HepG2 (cell line): ENCODE measurements at regions of chr3 and their contacts with region 1.

Region 1: GRCh38 chr3:159804726-159805410 is 183.8 kb upstream of the IL12A start:
- DNase-seq: peak; percentile 73
- ATAC-seq: peak; percentile 99
- H3K4me3 ChIP-seq: no peak overlapping the region
- H3K27ac ChIP-seq: no peak overlapping the region
- H3K4me1 ChIP-seq: peaks cover 7% of the 10 kb centered on the region; the same call in 1 of the 2 replicates
- H3K27me3 ChIP-seq: no peaks in the 10 kb centered on the region
- CTCF ChIP-seq: peak; percentile 94
- EP300 ChIP-seq: no peak
- POLR2A ChIP-seq: no peak
- RAD21 ChIP-seq: peak; percentile 91

Region 2: DNA sequence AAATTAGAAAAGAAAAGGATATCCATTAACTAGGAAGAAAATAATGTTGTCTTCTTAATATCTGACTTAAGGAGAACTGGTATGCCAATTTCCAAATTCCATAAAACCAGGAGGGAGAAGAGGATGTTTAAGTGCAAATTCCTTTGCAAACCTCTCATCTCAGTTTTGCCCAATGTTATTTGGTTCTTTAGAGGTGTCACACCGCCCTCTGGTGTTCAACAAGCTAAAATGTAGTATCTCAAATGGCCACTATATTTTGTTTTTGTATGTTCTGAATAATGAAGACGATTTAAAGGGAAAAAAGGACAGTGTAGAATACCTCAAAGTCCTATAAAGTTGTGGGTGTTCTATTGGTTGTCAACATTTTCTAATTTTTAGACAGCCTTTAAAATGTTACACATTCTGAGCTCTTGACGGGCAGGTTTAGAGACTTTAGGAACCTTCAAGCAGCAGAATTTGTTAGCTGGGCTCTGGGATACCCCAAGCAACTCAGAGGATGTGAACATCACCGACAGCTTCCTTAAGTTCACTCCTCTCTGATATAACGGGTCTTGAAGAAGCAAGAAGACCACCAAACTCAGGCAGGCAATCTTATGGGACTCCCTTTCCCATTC is 544.7 kb before region 1 on chr3:
- CTCF ChIA-PET with region 1: interaction called, 19 read pairs
- POLR2A ChIA-PET with region 1: no interaction called
- in situ Hi-C with region 1: loop called (anchors 5 kb)
- intact Hi-C with region 1: loop called (anchors 1 kb)
- DNase-seq: peak; percentile 56
- ATAC-seq: peak; percentile 68
- H3K4me3 ChIP-seq: no peak overlapping the region
- H3K27ac ChIP-seq: no peak overlapping the region
- H3K4me1 ChIP-seq: no peaks in the 10 kb centered on the region
- H3K27me3 ChIP-seq: no peaks in the 10 kb centered on the region
- CTCF ChIP-seq: peak; percentile 74
- EP300 ChIP-seq: no peak
- POLR2A ChIP-seq: no peak
- RAD21 ChIP-seq: peak; percentile 57

Region 3: DNA sequence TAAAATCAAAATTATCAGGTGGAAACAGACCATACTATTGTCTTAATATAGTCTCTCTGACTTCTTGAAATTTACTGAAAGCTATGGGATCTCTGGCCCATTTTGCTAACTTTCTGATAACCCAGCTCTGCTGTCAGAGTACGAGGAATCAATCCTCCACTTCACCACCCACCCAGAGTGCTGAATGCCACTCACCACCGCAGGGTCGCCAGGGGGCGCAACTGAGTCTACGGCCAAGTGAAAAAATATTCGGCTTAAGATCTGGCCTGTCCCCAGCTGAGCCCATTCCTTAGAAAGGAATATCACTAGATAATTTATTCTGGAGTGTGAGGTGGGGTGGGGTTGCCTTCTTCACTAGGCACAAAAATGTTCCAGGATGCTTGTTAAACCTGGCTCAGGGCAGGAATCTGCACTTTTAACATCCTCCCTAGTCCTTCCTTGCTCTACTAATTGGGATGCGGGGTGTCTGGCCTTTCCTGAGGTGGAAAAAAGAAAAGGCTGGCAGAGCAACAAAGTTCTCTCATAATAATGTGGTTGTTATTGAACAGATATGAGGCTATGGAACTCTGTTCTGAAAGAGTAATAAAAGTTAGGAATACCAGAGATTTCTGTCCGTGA is 482.4 kb before region 1 on chr3:
- CTCF ChIA-PET with region 1: no interaction called
- POLR2A ChIA-PET with region 1: no interaction called
- in situ Hi-C with region 1: no loop called
- intact Hi-C with region 1: loop called (anchors 1 kb)
- DNase-seq: peak; percentile 7
- ATAC-seq: peak; percentile 70
- H3K4me3 ChIP-seq: no peak overlapping the region
- H3K27ac ChIP-seq: no peak overlapping the region
- H3K4me1 ChIP-seq: no peaks in the 10 kb centered on the region
- H3K27me3 ChIP-seq: no peaks in the 10 kb centered on the region
- CTCF ChIP-seq: peak; percentile 57
- EP300 ChIP-seq: no peak
- POLR2A ChIP-seq: no peak
- RAD21 ChIP-seq: no peak

Region 4: DNA sequence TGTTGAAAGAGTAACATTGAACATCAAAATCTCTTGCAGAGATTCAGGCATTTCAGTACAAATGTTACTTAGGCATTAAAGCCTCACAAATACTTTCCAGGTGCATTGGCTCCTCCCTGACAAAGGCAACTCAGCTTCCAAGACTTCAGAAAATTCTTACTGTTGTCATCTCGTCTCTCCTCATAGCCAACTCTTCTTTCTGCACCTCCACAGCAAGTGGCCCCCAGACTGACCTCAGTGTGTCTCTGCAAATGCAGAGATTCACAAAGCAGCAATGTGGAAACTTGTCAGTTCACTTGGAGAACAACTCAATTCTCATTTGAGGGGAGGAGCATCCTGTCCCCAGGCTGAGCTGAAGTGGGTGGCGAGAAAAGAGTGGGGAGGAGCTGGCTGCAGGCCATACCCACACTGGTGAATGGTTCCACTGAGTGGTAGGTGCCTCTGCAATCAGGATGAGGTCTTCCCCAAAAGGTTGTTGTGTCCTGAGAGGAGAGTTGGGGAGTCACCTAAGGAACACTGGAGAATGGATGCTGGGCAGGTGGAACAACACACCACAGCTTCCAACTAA is 64.9 kb before region 1 on chr3:
- CTCF ChIA-PET with region 1: no interaction called
- POLR2A ChIA-PET with region 1: no interaction called
- in situ Hi-C with region 1: no loop called
- intact Hi-C with region 1: loop called (anchors 10 kb)
- DNase-seq: no peak
- ATAC-seq: no peak
- H3K4me3 ChIP-seq: no peak overlapping the region
- H3K27ac ChIP-seq: no peak overlapping the region
- H3K4me1 ChIP-seq: peaks cover 8% of the 10 kb centered on the region; the same call in 1 of the 2 replicates
- H3K27me3 ChIP-seq: no peaks in the 10 kb centered on the region; a peak in 1 of 5 replicates
- CTCF ChIP-seq: no peak
- EP300 ChIP-seq: no peak
- POLR2A ChIP-seq: no peak
- RAD21 ChIP-seq: no peak

Region 5: DNA sequence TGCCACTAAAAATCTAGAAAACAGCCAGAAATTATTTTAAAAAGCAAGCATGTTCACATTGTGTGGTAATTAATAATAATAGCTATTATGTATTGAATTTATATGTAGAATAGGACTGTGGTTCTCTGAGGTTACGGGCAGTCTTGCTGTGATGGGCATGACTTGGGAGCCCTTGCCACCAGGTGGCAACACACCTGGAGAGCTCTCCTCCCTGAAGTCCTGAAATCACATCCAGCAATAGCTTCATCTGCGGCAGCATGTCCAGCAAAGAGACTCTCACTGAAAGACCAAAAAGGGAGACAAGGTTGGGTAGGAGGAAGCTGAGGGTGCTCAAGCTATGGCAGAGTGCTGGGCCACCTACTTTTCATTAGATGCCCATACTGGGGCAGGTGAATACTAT is 23.0 kb before region 1 on chr3:
- CTCF ChIA-PET with region 1: interaction called, 33 read pairs
- POLR2A ChIA-PET with region 1: no interaction called
- in situ Hi-C with region 1: no loop called
- intact Hi-C with region 1: loop called (anchors 1 kb)
- DNase-seq: no peak
- ATAC-seq: peak; percentile 51; the same call in 2 of the 3 replicates
- H3K4me3 ChIP-seq: no peak overlapping the region
- H3K27ac ChIP-seq: no peak overlapping the region
- H3K4me1 ChIP-seq: peaks cover 48% of the 10 kb centered on the region
- H3K27me3 ChIP-seq: peaks cover 0 to 4% of the 10 kb centered on the region in 2 experiments; a peak in 1 of 5 replicates
- CTCF ChIP-seq: peak; percentile 44
- EP300 ChIP-seq: no peak
- POLR2A ChIP-seq: no peak
- RAD21 ChIP-seq: no peak